Posterior cingulate gyrus (tissue), 11 donors: ENCODE measurements at regions of chr2 and their contacts with region 1.

Region 1: GRCh38 chr2:134245340-134245984 is 8.4 kb upstream of the MGAT5 start:
- DNase-seq: peak; percentile 36 to 92 (median 84)

Region 2: GRCh38 chr2:134146620-134147019 is 98.8 kb before region 1 on chr2:
- intact Hi-C with region 1: no loop called
- DNase-seq: no peak

Region 3: DNA sequence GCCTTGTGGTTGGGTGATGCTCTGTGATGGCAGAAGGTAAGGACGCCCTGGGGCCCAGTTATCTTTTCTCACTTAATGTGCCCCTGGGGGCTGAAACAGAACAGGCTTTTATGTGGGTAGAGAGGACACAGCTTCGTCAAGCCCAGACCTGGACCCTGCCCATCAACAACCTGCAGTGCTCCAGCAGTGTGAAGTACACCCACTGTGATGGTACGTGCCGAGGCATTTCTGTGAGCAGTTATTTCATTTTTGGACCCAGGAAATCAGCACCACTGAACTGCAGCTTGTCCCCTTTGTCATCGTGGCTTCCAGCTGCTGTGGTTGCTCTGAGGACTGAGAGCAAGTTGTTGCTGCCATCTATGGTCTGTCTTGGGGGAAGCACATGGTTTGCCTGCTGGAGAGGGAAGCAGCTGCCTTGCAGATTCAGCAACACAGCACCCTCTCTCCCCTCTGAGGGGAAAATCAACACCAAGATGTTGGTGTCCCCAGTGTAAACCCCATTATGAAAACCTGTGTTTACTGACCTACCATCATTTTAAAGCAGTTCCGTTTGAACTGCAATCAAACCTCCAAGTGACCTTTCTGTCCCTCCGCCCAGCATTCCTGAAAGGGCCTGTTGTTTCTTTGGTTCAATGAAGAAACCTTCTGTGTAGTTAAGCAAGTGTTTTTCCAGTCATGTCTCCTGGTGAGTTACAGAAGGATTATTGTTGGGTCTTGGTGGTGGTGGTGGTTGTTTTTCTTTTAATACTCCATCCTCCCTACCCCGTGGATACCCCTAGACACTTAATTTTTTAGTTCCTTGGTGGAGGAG is 166.6 kb after region 1 on chr2:
- intact Hi-C with region 1: loop called (anchors 1 kb)
- DNase-seq: peak; percentile 71 to 97 (median 82)